ENCODE measurements at regions of chr11 and their contacts with region 1.

Region 1: DNA sequence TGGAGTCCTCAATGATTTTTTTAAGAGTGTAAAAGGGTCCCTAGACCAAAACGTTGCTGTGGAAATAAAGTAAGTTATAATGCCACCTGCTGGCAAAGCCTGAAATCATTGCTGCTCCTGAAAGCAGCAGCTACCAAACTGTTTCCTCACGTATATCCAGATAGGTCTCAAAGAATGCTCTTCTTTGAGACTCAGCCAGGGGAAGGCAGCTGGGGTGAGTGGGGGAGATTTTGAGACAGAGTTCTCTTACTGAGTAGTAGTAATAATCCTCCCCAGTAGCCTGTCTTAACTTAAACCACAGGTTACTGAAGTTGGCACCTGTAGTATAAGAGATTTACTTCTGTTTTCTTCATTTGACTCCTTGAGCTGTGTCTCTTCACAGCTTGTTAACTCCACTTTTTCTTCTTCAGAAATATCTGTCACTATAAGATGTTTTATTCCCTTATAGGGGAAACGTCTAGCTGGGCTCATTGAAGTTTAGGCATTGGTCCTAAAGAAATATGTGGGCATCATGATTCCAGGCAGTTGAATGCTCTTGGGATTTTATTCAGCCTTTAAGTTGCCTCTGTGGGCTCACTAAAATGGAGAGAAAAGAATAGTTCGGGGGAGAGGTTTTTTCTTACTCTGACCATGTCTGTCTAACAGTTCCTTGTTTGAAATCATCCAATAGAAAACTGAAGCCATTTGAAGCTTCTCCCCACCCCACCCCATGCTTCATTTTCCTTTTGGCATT is 77.9 kb downstream of the BTBD10 start:
- DNase-seq: peak; percentile 34
- H3K4me3 Mint-ChIP-seq: no peak overlapping the region
- H3K27ac Mint-ChIP-seq: no peak overlapping the region
- H3K4me1 Mint-ChIP-seq: no peaks in the 10 kb centered on the region
- H3K27me3 Mint-ChIP-seq: no peaks in the 10 kb centered on the region
- CTCF ChIP-seq: peak; percentile 58

Region 2: GRCh38 chr11:13332124-13332523 is 53.0 kb before region 1 on chr11:
- CTCF ChIA-PET with region 1: no interaction called
- POLR2A ChIA-PET with region 1: no interaction called
- intact Hi-C with region 1: no loop called
- DNase-seq: no peak
- H3K4me3 Mint-ChIP-seq: no peak overlapping the region
- H3K27ac Mint-ChIP-seq: peak overlapping the region; percentile 76
- H3K4me1 Mint-ChIP-seq: peaks cover 58% of the 10 kb centered on the region
- H3K27me3 Mint-ChIP-seq: no peaks in the 10 kb centered on the region
- CTCF ChIP-seq: no peak

Region 3: GRCh38 chr11:13373216-13373615 is 11.9 kb before region 1 on chr11:
- CTCF ChIA-PET with region 1: interaction called, 14 read pairs
- POLR2A ChIA-PET with region 1: interaction called, 4 read pairs
- intact Hi-C with region 1: no loop called
- DNase-seq: no peak
- H3K4me3 Mint-ChIP-seq: no peak overlapping the region
- H3K27ac Mint-ChIP-seq: no peak overlapping the region
- H3K4me1 Mint-ChIP-seq: peaks cover 2% of the 10 kb centered on the region
- H3K27me3 Mint-ChIP-seq: no peaks in the 10 kb centered on the region
- CTCF ChIP-seq: no peak

Region 4: GRCh38 chr11:13405220-13405619 is 20.1 kb after region 1 on chr11:
- CTCF ChIA-PET with region 1: interaction called, 11 read pairs
- POLR2A ChIA-PET with region 1: no interaction called
- intact Hi-C with region 1: no loop called
- DNase-seq: no peak
- H3K4me3 Mint-ChIP-seq: no peak overlapping the region
- H3K27ac Mint-ChIP-seq: no peak overlapping the region
- H3K4me1 Mint-ChIP-seq: no peaks in the 10 kb centered on the region
- H3K27me3 Mint-ChIP-seq: no peaks in the 10 kb centered on the region
- CTCF ChIP-seq: no peak

Region 5: DNA sequence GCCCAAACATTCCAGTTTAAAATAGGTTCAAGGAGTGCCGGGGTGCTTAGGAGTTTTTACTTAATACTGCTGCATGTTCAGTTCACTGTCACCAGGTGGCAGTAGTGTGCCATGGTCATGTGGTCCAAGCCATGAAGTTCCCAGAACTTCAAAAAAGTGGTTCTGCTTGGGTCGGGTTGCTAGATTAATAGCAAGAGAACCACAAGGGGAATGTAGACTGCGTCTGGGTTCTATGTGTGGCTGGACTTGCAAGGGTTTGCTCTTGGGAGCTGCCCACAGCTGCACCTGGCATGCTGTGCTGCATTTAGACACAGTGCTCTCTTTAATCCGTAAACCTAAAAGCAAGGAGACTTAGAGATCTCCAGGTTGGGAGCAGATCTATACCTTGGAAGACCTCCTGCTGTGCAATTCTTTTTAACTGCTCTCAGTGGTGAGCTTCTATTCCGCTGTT is 570.9 kb after region 1 on chr11:
- CTCF ChIA-PET with region 1: no interaction called
- POLR2A ChIA-PET with region 1: no interaction called
- intact Hi-C with region 1: no loop called
- DNase-seq: peak; percentile 72
- H3K4me3 Mint-ChIP-seq: no peak overlapping the region
- H3K27ac Mint-ChIP-seq: no peak overlapping the region
- H3K4me1 Mint-ChIP-seq: no peaks in the 10 kb centered on the region
- H3K27me3 Mint-ChIP-seq: peaks cover 27% of the 10 kb centered on the region
- CTCF ChIP-seq: peak; percentile 82